ENCODE measurements at regions of chr1 and their contacts with region 1.

Region 1: DNA sequence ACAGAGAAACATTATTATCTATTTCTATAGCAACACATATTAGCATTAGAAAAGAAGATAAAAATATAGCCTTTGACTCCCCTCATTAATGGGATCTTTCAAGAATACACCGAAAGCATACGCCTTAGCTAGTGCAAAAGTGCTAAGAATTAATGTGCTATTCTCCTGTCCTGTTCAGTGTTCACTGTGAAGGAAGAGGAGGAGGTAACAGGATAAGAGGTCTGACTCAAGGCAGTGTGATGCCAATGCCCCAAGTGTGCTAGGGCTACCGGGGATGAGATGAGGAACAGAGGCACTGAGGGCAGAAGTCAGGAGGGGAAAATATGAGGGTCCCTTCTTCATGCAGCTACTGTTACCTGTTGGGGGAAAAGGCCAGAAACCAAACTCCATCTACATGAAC is 43.5 kb downstream of the USP24 start:
- DNase-seq: no peak
- H3K4me3 Mint-ChIP-seq: no peak overlapping the region
- H3K27ac Mint-ChIP-seq: no peak overlapping the region
- H3K4me1 Mint-ChIP-seq: peaks cover 21% of the 10 kb centered on the region
- H3K27me3 Mint-ChIP-seq: no peaks in the 10 kb centered on the region

Region 2: DNA sequence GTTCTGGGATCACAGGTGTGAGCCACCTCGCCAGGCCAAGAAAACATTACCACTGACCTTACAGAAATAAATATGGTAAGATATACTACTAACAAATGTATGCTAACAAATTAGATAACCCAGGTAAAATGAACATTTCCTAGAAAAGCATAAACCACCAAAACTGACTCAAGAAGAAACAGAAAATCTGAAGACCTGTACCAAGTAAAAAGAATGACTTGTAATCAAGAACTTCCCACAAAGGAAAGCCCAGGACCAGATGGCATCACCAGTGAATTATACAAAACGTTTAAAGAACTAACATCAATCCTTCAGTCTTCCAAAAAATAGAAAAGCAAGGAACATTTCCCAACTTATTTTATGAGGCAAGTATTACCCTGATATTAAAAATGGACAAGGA is 14.1 kb after region 1 on chr1:
- intact Hi-C with region 1: loop called (anchors 2 kb)
- DNase-seq: no peak
- H3K4me3 Mint-ChIP-seq: no peak overlapping the region
- H3K27ac Mint-ChIP-seq: peak overlapping the region; percentile 18
- H3K4me1 Mint-ChIP-seq: peaks cover 21% of the 10 kb centered on the region
- H3K27me3 Mint-ChIP-seq: no peaks in the 10 kb centered on the region

Measured in activated CD4-positive, alpha-beta T cell treated with anti-CD3 and anti-CD28 coated beads, Interleukin-2, amount 10 ng/mL, durations not matched to agents 24 days and 14 days (primary cell).